ENCODE measurements at regions of chr7 and their contacts with region 1.

Region 1: GRCh38 chr7:44847508-44847920 is 373 bp downstream of the H2AZ2 start:
- DNase-seq: peak; percentile 91
- H3K4me3 ChIP-seq: peak overlapping the region; percentile 38 to 97 (median 65)
- H3K27ac ChIP-seq: peak overlapping the region; percentile 51
- H3K4me1 ChIP-seq: peaks cover 17% of the 10 kb centered on the region
- H3K27me3 ChIP-seq: no peaks in the 10 kb centered on the region
- CTCF ChIP-seq: peak; percentile 89 to 94
- POLR2A ChIP-seq: no peak

Region 2: DNA sequence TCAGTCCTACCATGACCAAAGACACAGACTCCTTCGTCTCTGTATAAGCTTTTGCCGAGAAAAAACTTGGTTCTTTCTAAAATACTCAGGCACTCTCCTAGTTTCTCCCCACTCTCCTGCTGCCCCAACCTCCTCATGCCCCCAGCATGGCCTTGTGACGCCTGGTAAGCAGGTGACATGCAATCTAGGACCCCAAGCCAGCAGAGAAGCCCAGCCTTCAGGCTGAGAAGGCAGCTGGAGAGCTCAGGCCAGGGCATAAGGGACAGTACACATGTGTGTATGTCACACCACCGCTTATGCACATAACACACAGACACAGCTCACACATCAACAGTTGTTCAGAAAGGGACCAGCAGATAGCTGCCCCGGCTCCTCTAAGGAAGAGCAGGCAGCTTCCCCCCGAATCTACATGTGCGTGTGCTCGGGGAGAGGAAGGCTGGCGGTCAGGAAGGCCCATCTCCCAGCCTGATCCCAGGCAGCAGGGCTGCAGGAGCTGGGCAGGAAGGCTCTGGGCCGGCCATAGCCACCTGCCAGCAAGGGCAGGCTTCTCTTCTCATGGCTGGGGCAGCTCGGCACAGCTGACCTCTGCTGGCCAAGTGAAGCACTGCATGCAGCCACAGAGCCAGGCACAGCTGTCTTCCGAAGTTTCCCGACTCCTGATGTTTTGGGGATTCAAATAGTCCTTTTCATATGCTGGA is 282.3 kb before region 1 on chr7:
- CTCF ChIA-PET with region 1: no interaction called
- POLR2A ChIA-PET with region 1: no interaction called
- dilution Hi-C with region 1: no loop called
- intact Hi-C with region 1: no loop called
- DNase-seq: peak; percentile 62
- H3K4me3 ChIP-seq: no peak overlapping the region
- H3K27ac ChIP-seq: no peak overlapping the region
- H3K4me1 ChIP-seq: no peaks in the 10 kb centered on the region
- H3K27me3 ChIP-seq: no peaks in the 10 kb centered on the region
- CTCF ChIP-seq: peak; percentile 94 to 98
- POLR2A ChIP-seq: no peak

Region 3: GRCh38 chr7:44581879-44582603 is 265.5 kb before region 1 on chr7 and contains the start of gene TMED4:
- CTCF ChIA-PET with region 1: interaction called, 20 read pairs
- POLR2A ChIA-PET with region 1: interaction called, 6 read pairs
- dilution Hi-C with region 1: no loop called
- intact Hi-C with region 1: loop called (anchors 1 kb)
- DNase-seq: peak; percentile 99
- H3K4me3 ChIP-seq: peak within 1 kb of the TSS; percentile 34 to 78 (median 67)
- H3K27ac ChIP-seq: peak within 1 kb of the TSS; percentile 73
- H3K4me1 ChIP-seq: peaks cover 8% of the 10 kb centered on the region
- H3K27me3 ChIP-seq: no peaks in the 10 kb centered on the region
- CTCF ChIP-seq: no peak
- POLR2A ChIP-seq: peak; percentile 98
- total RNA-seq, gene TMED4: 63.4 and 65.4 TPM in 2 replicates

Region 4: GRCh38 chr7:44606450-44607254 is 240.9 kb before region 1 on chr7 and contains the start of gene OGDH:
- CTCF ChIA-PET with region 1: interaction called, 5 read pairs
- POLR2A ChIA-PET with region 1: interaction called, 3 read pairs
- dilution Hi-C with region 1: no loop called
- intact Hi-C with region 1: loop called (anchors 1 kb)
- DNase-seq: peak; percentile 99
- H3K4me3 ChIP-seq: peak within 1 kb of the TSS; percentile 57 to 98 (median 81)
- H3K27ac ChIP-seq: peak within 1 kb of the TSS; percentile 80
- H3K4me1 ChIP-seq: peaks cover 11% of the 10 kb centered on the region
- H3K27me3 ChIP-seq: peaks cover 0 to 2% of the 10 kb centered on the region in 2 experiments
- CTCF ChIP-seq: no peak
- POLR2A ChIP-seq: peak; percentile 86
- total RNA-seq, gene OGDH: 81.4 and 88.9 TPM in 2 replicates

Region 5: DNA sequence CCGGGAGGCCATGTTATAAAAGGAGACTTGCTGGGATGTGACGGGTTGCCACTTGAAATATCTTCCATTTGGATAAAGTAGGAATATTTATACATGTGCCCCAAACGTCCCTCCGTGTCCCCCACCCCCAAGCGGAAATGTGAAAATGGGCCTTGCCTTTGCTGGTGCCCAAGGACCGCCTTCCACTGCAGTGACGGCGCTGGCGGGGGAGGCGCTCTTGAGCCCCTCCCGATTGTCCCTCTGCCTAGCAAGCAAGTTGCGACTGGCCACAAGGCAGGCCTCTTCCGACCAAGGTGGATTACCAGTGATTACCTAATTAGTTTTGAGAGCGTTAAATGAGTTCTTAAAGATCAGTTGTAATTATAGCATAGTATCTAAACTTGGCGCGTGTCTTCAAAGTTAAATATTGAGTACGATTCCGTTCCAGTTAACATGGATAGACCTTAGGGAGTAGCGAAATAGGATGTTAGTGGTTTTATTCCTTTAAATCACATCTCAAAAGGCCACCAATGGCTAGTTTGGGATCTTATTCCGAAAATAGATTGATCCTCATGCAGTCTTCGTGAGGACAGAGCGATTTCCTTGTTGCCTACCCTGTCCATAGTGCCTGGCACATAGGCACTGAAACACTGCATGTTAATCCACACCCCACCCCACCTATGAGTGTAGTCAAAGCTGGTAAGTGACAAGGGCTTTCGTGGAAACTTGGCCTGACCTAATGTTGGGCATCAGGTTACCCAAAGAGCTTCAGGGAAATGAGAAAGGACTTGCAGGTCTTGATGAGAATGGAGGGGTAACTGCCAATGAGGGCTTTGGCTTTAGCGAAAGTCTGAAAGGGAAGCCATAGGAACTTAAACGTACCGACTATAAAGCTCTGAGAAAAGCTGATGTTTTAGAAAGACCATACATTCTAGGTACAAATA is 49.9 kb before region 1 on chr7:
- CTCF ChIA-PET with region 1: interaction called, 14 read pairs
- POLR2A ChIA-PET with region 1: interaction called, 10 read pairs
- dilution Hi-C with region 1: no loop called
- intact Hi-C with region 1: loop called (anchors 1 kb)
- DNase-seq: peak; percentile 90
- H3K4me3 ChIP-seq: peak overlapping the region; percentile 91 to 93 (median 93)
- H3K27ac ChIP-seq: peak overlapping the region; percentile 97
- H3K4me1 ChIP-seq: peaks cover 10% of the 10 kb centered on the region
- H3K27me3 ChIP-seq: no peaks in the 10 kb centered on the region
- CTCF ChIP-seq: peak; percentile 20 to 56
- POLR2A ChIP-seq: peak; percentile 43

Region 6: DNA sequence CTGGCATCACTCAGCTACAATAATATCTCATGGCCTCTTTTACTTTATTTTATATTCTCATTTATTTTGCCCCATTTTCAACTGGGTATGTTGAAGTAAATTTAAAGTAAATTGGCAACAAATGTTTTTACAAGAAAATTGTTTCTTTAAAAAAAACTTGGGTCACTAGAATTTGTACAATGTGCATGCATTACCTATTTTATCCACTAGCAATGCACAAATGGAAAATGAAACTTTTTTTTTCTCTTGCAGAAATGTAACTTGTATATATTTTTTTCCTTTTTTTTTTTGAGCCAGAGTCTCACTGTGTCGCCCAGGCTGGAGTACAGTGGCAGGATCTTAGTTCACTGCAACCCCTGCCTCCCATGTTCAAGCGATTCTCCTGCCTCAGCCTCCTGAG is 10.6 kb after region 1 on chr7:
- CTCF ChIA-PET with region 1: interaction called, 14 read pairs
- POLR2A ChIA-PET with region 1: no interaction called
- dilution Hi-C with region 1: no loop called
- intact Hi-C with region 1: no loop called
- DNase-seq: no peak
- H3K4me3 ChIP-seq: no peak overlapping the region
- H3K27ac ChIP-seq: no peak overlapping the region
- H3K4me1 ChIP-seq: no peaks in the 10 kb centered on the region
- H3K27me3 ChIP-seq: no peaks in the 10 kb centered on the region
- CTCF ChIP-seq: no peak
- POLR2A ChIP-seq: no peak

Region 7: DNA sequence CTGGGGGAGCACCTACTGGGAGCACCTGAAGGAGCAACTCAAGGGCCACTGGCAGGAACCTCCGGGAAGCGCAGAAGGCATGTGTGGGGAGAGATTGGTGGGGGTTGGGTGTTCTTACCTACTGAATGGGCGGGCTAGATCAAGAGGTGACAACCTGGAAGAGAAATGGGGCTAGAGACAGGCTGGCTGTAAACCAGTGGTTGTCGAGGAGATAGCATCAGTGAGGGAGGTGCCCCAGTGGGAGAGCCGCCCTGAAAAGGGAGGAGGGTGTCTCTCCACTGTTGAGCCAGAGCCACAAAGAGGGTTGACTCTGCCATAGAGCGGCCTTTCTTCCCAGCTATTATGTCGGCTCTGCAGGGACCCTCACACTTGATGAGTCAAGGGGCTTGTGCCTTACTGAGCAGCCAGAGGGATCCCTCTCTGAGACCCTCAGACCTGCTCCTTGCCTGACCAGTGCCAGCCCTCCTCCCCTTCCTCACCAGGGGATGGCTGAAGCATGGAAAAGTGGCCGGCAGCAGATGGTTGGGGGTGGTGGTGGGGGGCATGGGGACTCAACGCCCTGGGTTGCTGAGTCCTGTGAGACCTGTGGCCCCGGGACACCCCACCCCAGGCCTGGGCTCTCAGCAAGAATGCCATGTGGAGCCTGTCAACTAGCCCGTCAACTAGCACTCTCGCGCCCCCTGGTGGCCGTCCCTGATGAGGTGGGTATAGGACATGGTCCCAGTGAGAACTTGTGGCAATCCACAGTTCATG is 74.3 kb after region 1 on chr7:
- CTCF ChIA-PET with region 1: interaction called, 6 read pairs
- POLR2A ChIA-PET with region 1: no interaction called
- dilution Hi-C with region 1: no loop called
- intact Hi-C with region 1: loop called (anchors 2 kb)
- DNase-seq: peak; percentile 69
- H3K4me3 ChIP-seq: no peak overlapping the region
- H3K27ac ChIP-seq: no peak overlapping the region
- H3K4me1 ChIP-seq: no peaks in the 10 kb centered on the region
- H3K27me3 ChIP-seq: peaks cover 0 to 3% of the 10 kb centered on the region in 2 experiments
- CTCF ChIP-seq: peak; percentile 75 to 91
- POLR2A ChIP-seq: no peak

Region 8: GRCh38 chr7:45111298-45112223 is 264.0 kb after region 1 on chr7 and contains the start of gene TBRG4:
- CTCF ChIA-PET with region 1: no interaction called
- POLR2A ChIA-PET with region 1: no interaction called
- dilution Hi-C with region 1: no loop called
- intact Hi-C with region 1: loop called (anchors 5 kb)
- DNase-seq: peak; percentile 93
- H3K4me3 ChIP-seq: peak within 1 kb of the TSS; percentile 33 to 88 (median 64)
- H3K27ac ChIP-seq: peak within 1 kb of the TSS; percentile 57
- H3K4me1 ChIP-seq: peaks cover 8% of the 10 kb centered on the region
- H3K27me3 ChIP-seq: peaks cover 11 to 26% of the 10 kb centered on the region in 2 experiments
- CTCF ChIP-seq: peak in 1 of 2 donors; percentile 42
- POLR2A ChIP-seq: peak; percentile 82
- total RNA-seq, gene TBRG4: 56.7 and 63.4 TPM in 2 replicates